MCF 10A (cell line): ENCODE measurements at regions of chr17 and their contacts with region 1.

Region 1: DNA sequence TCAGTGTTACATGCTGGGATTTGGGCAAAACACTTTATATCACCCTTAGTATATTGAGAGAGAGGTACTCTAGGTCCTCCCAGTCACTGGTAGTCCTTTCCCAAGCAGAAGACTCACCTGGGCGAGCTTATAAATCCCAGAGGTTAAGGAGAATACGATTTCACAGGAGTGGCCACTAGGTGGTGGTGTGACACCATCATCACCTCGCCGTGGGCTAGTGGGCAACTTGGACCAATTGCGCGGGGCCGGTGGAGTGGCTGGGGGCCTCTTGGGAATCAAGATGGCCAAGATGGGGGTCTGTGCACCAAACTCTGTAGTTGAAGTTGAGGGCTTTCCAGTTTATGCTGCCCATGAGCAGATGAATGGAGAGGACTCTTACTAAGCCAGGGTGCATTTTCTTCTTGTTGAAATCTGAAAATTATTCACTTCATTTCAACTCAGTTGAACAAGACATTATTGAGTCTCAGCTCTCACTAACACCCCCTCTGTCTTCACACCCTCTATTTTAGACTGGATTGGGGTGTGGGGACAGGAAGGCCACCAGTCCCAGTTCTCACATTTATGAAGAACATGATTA is 38.2 kb upstream of the PIRT start:
- DNase-seq: peak; percentile 27
- H3K4me3 Mint-ChIP-seq: no peak overlapping the region
- H3K27ac Mint-ChIP-seq: no peak overlapping the region
- H3K4me1 Mint-ChIP-seq: peaks cover 9% of the 10 kb centered on the region
- H3K27me3 Mint-ChIP-seq: peaks cover 11% of the 10 kb centered on the region
- CTCF ChIP-seq: peak; percentile 75

Region 2: GRCh38 chr17:11144358-11145233 is 268.5 kb after region 1 on chr17:
- CTCF ChIA-PET with region 1: interaction called, 154 read pairs
- POLR2A ChIA-PET with region 1: no interaction called
- intact Hi-C with region 1: loop called (anchors 1 kb)
- DNase-seq: peak; percentile 46
- H3K4me3 Mint-ChIP-seq: no peak overlapping the region
- H3K27ac Mint-ChIP-seq: no peak overlapping the region
- H3K4me1 Mint-ChIP-seq: peaks cover 14% of the 10 kb centered on the region
- H3K27me3 Mint-ChIP-seq: no peaks in the 10 kb centered on the region
- CTCF ChIP-seq: peak; percentile 74

Region 3: DNA sequence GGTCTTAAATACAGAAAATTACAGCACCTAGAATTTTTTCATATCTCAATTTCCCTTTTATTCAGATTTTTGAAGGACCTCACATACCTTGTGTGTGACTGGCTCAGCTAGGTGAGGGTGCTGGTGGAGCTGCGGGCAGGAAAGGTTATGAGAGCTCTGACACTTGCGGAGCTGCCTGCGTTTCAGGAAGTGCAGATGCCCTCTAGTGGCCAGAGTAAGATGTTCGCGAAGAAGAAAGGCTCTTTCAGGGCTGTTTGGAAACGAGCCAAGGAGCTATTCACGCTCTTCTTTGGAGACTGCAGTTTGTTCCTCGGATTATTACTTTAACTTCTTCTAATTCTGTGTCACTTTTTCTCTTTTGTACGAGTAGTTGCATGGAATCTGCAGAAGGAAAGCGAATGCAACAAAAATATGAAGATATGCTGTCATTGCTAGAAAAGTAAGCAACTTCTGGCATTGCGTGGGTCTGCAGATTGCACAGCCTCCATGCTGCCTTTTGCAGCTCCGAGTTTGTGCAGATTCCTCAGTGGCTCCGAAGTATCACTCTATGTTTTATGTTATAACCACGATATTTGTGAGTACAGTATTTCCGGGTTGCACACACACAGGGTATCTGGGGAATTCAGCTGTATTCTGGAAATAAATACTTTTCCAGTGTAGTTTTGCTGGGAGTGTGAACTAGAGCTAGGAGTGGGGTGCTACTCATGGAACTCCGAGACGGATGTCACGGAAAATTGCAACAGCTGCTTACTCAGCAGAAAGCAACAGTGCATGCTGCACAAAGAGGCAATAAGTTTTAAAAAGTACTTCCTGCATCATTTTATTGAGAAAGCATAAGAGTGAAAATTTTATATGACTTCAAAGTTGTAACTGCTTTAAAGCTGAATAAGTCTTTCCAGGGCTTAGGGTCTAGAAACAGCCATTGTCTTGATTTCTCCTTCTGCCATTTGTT is 768.5 kb after region 1 on chr17:
- CTCF ChIA-PET with region 1: interaction called, 3 read pairs
- POLR2A ChIA-PET with region 1: no interaction called
- intact Hi-C with region 1: loop called (anchors 1 kb)
- DNase-seq: peak; percentile 63
- H3K4me3 Mint-ChIP-seq: no peak overlapping the region
- H3K27ac Mint-ChIP-seq: no peak overlapping the region
- H3K4me1 Mint-ChIP-seq: peaks cover 17% of the 10 kb centered on the region
- H3K27me3 Mint-ChIP-seq: no peaks in the 10 kb centered on the region
- CTCF ChIP-seq: peak; percentile 74

Region 4: GRCh38 chr17:11880714-11881113 is 1004.6 kb after region 1 on chr17:
- CTCF ChIA-PET with region 1: interaction called, 11 read pairs
- POLR2A ChIA-PET with region 1: no interaction called
- intact Hi-C with region 1: loop called (anchors 1 kb)
- DNase-seq: peak; percentile 5
- H3K4me3 Mint-ChIP-seq: no peak overlapping the region
- H3K27ac Mint-ChIP-seq: no peak overlapping the region
- H3K4me1 Mint-ChIP-seq: no peaks in the 10 kb centered on the region
- H3K27me3 Mint-ChIP-seq: no peaks in the 10 kb centered on the region
- CTCF ChIP-seq: peak; percentile 59

Region 5: GRCh38 chr17:11940904-11941303 is 1064.8 kb after region 1 on chr17:
- CTCF ChIA-PET with region 1: interaction called, 51 read pairs
- POLR2A ChIA-PET with region 1: interaction called, 4 read pairs
- intact Hi-C with region 1: loop called (anchors 1 kb)
- DNase-seq: no peak
- H3K4me3 Mint-ChIP-seq: no peak overlapping the region
- H3K27ac Mint-ChIP-seq: no peak overlapping the region
- H3K4me1 Mint-ChIP-seq: peaks cover 16% of the 10 kb centered on the region
- H3K27me3 Mint-ChIP-seq: no peaks in the 10 kb centered on the region
- CTCF ChIP-seq: no peak